Heart right ventricle (tissue), 16 donors: ENCODE measurements at regions of chr12 and their contacts with region 1.

Region 1: GRCh38 chr12:108394196-108394595 is 55.1 kb upstream of the CMKLR1 start:
- DNase-seq: peak; percentile 13 to 39
- ATAC-seq: peak; percentile 38 to 86 (median 74)
- H3K4me3 ChIP-seq: no peak overlapping the region
- H3K27ac ChIP-seq: no peak overlapping the region
- H3K4me1 ChIP-seq: peaks cover 0 to 14% (median 0%) of the 10 kb centered on the region in 9 donors
- H3K27me3 ChIP-seq: peaks cover 0 to 27% (median 7%) of the 10 kb centered on the region in 7 donors
- CTCF ChIP-seq: no peak

Region 2: DNA sequence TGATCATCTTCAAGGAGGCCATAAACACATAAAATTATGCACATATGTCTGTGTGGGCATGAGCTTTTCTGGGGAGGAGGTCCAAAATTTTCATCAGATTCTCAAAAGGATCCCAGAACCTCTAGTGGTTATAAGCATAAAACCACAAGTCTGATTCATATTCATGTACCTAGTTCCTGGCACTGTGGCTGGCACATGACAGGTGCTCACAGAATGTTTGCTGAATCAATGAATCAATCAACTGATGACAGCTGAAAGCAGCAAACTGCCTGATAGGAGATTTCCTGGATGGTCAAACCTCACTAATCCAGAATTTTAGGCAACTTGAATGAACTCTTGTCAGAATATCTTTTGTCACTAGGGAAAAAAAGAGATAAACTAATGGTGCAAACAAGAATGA is 41.6 kb before region 1 on chr12:
- intact Hi-C with region 1: loop called in 1 of 10 experiments (anchors 5 kb)
- DNase-seq: no peak
- ATAC-seq: no peak
- H3K4me3 ChIP-seq: no peak overlapping the region
- H3K27ac ChIP-seq: no peak overlapping the region
- H3K4me1 ChIP-seq: no peaks in the 10 kb centered on the region
- H3K27me3 ChIP-seq: peaks cover 0 to 3% (median 0%) of the 10 kb centered on the region in 7 donors
- CTCF ChIP-seq: no peak

Region 3: GRCh38 chr12:108430245-108430644 is 36.0 kb after region 1 on chr12:
- intact Hi-C with region 1: no loop called
- DNase-seq: no peak
- ATAC-seq: no peak
- H3K4me3 ChIP-seq: no peak overlapping the region
- H3K27ac ChIP-seq: no peak overlapping the region
- H3K4me1 ChIP-seq: no peaks in the 10 kb centered on the region
- H3K27me3 ChIP-seq: peaks cover 0 to 14% (median 0%) of the 10 kb centered on the region in 7 donors
- CTCF ChIP-seq: no peak

Region 4: GRCh38 chr12:108597559-108598471 is 203.6 kb after region 1 on chr12 and contains the start of gene TMEM119:
- intact Hi-C with region 1: no loop called
- DNase-seq: peak in 1 of 2 donors; percentile 38
- ATAC-seq: peak; percentile 49 to 77 (median 68)
- H3K4me3 ChIP-seq: peak within 1 kb of the TSS in 7 of 10 donors; percentile 16 to 48 (median 40)
- H3K27ac ChIP-seq: peak within 1 kb of the TSS in 2 of 10 donors; percentile 44 to 57
- H3K4me1 ChIP-seq: no peaks in the 10 kb centered on the region
- H3K27me3 ChIP-seq: peaks cover 0 to 3% (median 0%) of the 10 kb centered on the region in 7 donors
- CTCF ChIP-seq: no peak
- total RNA-seq, gene TMEM119: 0.57 to 6.9 (median 2.0) TPM

Region 5: GRCh38 chr12:109773384-109774011 is 1379.3 kb after region 1 on chr12:
- intact Hi-C with region 1: no loop called
- DNase-seq: no peak
- ATAC-seq: peak in 3 of 8 donors; percentile 39 to 68 (median 42)
- H3K4me3 ChIP-seq: peak overlapping the region in 1 of 10 donors; percentile 11
- H3K27ac ChIP-seq: no peak overlapping the region
- H3K4me1 ChIP-seq: peaks cover 0 to 12% (median 6%) of the 10 kb centered on the region in 9 donors
- H3K27me3 ChIP-seq: no peaks in the 10 kb centered on the region
- CTCF ChIP-seq: no peak